ENCODE measurements at regions of chr4 and their contacts with region 1.

Region 1: DNA sequence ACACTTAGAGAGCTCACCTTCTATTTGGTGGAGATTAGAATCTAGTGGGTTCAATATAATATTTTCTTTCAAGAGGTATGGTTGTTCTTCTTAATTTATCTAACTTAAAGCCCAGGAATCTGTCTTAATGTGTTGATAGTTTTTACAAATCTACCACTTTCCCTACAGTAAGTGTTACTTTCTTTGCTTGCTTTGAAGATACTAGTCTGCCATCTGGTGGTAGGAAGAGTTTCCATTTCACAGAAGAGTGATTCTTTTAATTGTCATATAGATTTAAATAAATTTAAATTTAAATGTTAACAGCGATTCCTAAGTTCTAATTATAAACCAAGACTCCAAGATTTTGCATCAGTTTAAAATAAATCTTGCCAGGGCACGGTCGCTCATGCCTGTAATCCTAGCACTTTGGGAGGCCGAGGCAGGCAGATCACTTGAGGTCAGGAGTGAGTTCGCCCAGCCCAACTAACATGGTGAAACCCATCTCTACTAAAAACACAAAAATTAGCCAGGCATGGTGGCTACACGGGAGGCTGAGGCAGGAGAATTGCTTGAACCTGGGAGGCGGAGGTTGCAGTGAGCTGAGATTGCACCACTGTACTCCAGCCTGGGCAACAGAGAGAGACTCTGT is 43.5 kb downstream of the NUDT9 start:
- DNase-seq: no peak
- H3K4me3 Mint-ChIP-seq: no peak overlapping the region
- H3K27ac Mint-ChIP-seq: no peak overlapping the region
- H3K4me1 Mint-ChIP-seq: no peaks in the 10 kb centered on the region
- H3K27me3 Mint-ChIP-seq: no peaks in the 10 kb centered on the region

Region 2: GRCh38 chr4:87188048-87188447 is 277.8 kb before region 1 on chr4:
- CTCF ChIA-PET with region 1: no interaction called
- POLR2A ChIA-PET with region 1: no interaction called
- intact Hi-C with region 1: no loop called
- DNase-seq: no peak
- H3K4me3 Mint-ChIP-seq: no peak overlapping the region
- H3K27ac Mint-ChIP-seq: no peak overlapping the region
- H3K4me1 Mint-ChIP-seq: peaks cover 8% of the 10 kb centered on the region
- H3K27me3 Mint-ChIP-seq: no peaks in the 10 kb centered on the region

Region 3: DNA sequence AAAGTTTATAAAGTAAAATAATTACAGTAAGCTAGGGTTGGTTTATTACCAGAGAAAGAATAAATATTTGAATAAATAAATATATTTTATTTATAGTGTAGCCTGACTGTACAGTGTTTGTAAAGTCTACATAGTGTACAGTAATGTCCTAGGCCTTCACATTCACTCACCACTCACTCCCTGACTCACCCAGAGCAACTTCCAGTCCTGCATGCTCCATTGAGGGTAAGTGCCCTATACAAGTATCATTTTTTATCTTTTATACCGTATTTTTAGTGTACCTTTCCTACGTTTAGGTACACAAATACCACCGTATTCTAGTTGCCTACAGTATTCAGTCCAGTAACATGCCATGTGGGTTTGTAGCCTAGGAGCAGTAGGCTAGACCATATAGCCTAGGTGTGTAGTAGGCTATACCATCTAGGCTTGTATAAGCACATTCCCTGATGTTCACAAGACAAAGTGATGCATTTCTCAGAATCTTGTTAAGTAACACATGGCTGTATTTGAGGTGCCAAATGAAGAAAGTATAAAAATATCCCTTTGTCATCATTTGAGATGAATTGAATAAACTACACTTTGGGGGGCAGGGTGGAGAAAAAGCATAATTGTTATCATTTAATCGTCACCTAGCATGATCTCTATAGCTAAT is 230.7 kb before region 1 on chr4:
- CTCF ChIA-PET with region 1: no interaction called
- POLR2A ChIA-PET with region 1: no interaction called
- intact Hi-C with region 1: loop called (anchors 10 kb)
- DNase-seq: no peak
- H3K4me3 Mint-ChIP-seq: peak overlapping the region; percentile 73
- H3K27ac Mint-ChIP-seq: no peak overlapping the region
- H3K4me1 Mint-ChIP-seq: no peaks in the 10 kb centered on the region
- H3K27me3 Mint-ChIP-seq: peaks cover 2% of the 10 kb centered on the region

Region 4: GRCh38 chr4:87353592-87353991 is 112.3 kb before region 1 on chr4:
- CTCF ChIA-PET with region 1: interaction called, 15 read pairs
- POLR2A ChIA-PET with region 1: no interaction called
- intact Hi-C with region 1: loop called (anchors 5 kb)
- DNase-seq: peak; percentile 37
- H3K4me3 Mint-ChIP-seq: no peak overlapping the region
- H3K27ac Mint-ChIP-seq: no peak overlapping the region
- H3K4me1 Mint-ChIP-seq: no peaks in the 10 kb centered on the region
- H3K27me3 Mint-ChIP-seq: no peaks in the 10 kb centered on the region

Region 5: GRCh38 chr4:87390891-87391575 is 74.8 kb before region 1 on chr4 and contains the start of gene HSD17B11:
- CTCF ChIA-PET with region 1: interaction called, 15 read pairs
- POLR2A ChIA-PET with region 1: no interaction called
- intact Hi-C with region 1: loop called (anchors 5 kb)
- DNase-seq: peak; percentile 89
- H3K4me3 Mint-ChIP-seq: peak within 1 kb of the TSS; percentile 90
- H3K27ac Mint-ChIP-seq: peak within 1 kb of the TSS; percentile 78
- H3K4me1 Mint-ChIP-seq: peaks cover 31% of the 10 kb centered on the region
- H3K27me3 Mint-ChIP-seq: no peaks in the 10 kb centered on the region
- total RNA-seq, gene HSD17B11: 19.8 to 20.8 TPM

Region 6: GRCh38 chr4:87430038-87430437 is 35.8 kb before region 1 on chr4:
- CTCF ChIA-PET with region 1: no interaction called
- POLR2A ChIA-PET with region 1: no interaction called
- intact Hi-C with region 1: no loop called
- DNase-seq: no peak
- H3K4me3 Mint-ChIP-seq: no peak overlapping the region
- H3K27ac Mint-ChIP-seq: no peak overlapping the region
- H3K4me1 Mint-ChIP-seq: peaks cover 43% of the 10 kb centered on the region
- H3K27me3 Mint-ChIP-seq: no peaks in the 10 kb centered on the region